ENCODE measurements at regions of chr2 and their contacts with region 1.

Region 1: GRCh38 chr2:127086990-127087790 is 19.8 kb downstream of the BIN1 start:
- DNase-seq: peak; percentile 69
- ATAC-seq: peak; percentile 80
- H3K4me3 Mint-ChIP-seq: peak overlapping the region; percentile 36
- H3K27ac Mint-ChIP-seq: peak overlapping the region; percentile 84
- H3K4me1 Mint-ChIP-seq: peaks cover 46% of the 10 kb centered on the region
- H3K27me3 Mint-ChIP-seq: no peaks in the 10 kb centered on the region
- CTCF ChIP-seq: no peak

Region 2: DNA sequence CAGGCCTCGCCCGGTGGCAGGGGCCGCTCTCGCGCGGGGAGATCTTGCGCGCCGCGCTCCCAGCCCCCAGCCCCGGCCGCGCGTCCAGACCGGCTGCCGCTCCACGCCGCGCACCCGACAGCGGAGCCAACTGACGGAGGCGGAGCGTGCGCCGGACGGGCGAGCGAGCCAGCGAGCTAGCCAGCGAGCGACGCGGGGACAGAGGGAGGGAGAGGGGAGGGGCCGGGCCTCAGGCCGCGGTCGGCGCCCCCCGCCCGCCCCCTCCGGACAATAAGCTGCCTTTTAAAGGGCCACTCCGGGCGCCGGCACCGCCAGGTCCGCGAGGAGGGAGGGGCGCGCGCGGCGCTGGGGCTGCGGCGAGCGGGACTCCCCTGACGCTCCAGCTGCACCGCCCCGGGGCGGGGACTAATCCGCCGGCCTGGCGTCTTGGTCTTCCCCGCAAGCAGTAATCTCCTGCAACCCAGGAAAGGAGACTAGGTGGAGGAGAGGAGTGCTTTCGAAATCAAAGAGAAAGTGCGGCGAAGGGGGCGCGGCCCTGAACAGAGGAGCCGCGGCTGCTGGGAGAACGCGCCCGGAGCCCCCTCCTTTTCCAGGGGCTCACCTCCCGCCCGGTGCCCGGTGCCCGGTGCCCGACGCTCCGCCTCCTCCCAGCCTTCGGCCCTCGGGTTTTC is 19.9 kb after region 1 on chr2 and contains the start of gene BIN1:
- CTCF ChIA-PET with region 1: interaction called, 10 read pairs
- POLR2A ChIA-PET with region 1: interaction called, 9 read pairs
- DNase-seq: peak; percentile 91
- ATAC-seq: peak; percentile 80
- H3K4me3 Mint-ChIP-seq: peak within 1 kb of the TSS; percentile 86
- H3K27ac Mint-ChIP-seq: peak within 1 kb of the TSS; percentile 49
- H3K4me1 Mint-ChIP-seq: peaks cover 26% of the 10 kb centered on the region
- H3K27me3 Mint-ChIP-seq: peaks cover 3% of the 10 kb centered on the region; the same call in 1 of the 2 replicates
- CTCF ChIP-seq: no peak
- total RNA-seq, gene BIN1: 38.9 to 42.5 TPM (median 41.6 TPM) in 3 replicates

Region 3: GRCh38 chr2:127121776-127122176 is 34.6 kb after region 1 on chr2:
- CTCF ChIA-PET with region 1: no interaction called
- POLR2A ChIA-PET with region 1: no interaction called
- DNase-seq: no peak
- ATAC-seq: no peak
- H3K4me3 Mint-ChIP-seq: no peak overlapping the region
- H3K27ac Mint-ChIP-seq: no peak overlapping the region
- H3K4me1 Mint-ChIP-seq: no peaks in the 10 kb centered on the region
- H3K27me3 Mint-ChIP-seq: peaks cover 6% of the 10 kb centered on the region
- CTCF ChIP-seq: no peak